Activated CD8-positive, alpha-beta T cell treated with anti-CD3 and anti-CD28 coated beads for 36 hours (primary cell): ENCODE measurements at regions of chr3 and their contacts with region 1.

Region 1: DNA sequence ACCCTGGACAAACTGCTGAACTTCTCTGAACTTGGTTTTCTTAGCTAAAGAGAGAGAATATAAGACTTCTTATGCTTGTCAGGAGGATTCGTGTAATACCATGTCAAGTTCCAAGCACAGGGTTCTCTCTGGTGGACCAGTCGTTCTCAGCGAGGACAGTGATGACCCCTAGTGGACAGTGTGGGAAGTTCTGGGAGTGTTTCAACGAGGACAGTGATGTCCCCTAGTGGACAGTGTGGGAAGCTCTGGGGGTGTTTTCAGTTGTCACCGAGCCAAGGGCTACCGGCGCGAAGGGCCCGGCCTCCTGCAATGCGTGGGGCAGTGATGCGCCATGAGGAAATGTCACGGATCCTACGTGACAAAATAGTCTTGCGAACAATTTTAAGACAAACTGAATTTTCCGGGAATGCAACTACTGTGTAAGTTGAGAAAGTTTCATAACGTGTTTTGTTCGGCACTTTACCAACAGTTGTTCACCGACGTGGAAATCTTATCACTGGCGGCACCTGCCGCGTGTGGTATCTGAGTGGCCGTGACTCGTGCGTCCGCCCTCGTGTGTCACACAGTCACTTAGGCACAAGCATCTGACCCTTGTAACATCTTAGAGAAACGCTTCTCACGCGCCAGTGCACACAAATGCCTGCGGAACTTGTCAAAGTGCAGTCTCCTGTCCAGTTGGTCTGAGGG is 39.3 kb upstream of the MUC4 start:
- DNase-seq: peak; percentile 96
- ATAC-seq: peak; percentile 100
- H3K4me3 Mint-ChIP-seq: peak overlapping the region; percentile 24
- H3K27ac Mint-ChIP-seq: no peak overlapping the region
- H3K4me1 Mint-ChIP-seq: peaks cover 7% of the 10 kb centered on the region
- H3K27me3 Mint-ChIP-seq: peaks cover 9% of the 10 kb centered on the region
- CTCF ChIP-seq: peak; percentile 100

Region 2: DNA sequence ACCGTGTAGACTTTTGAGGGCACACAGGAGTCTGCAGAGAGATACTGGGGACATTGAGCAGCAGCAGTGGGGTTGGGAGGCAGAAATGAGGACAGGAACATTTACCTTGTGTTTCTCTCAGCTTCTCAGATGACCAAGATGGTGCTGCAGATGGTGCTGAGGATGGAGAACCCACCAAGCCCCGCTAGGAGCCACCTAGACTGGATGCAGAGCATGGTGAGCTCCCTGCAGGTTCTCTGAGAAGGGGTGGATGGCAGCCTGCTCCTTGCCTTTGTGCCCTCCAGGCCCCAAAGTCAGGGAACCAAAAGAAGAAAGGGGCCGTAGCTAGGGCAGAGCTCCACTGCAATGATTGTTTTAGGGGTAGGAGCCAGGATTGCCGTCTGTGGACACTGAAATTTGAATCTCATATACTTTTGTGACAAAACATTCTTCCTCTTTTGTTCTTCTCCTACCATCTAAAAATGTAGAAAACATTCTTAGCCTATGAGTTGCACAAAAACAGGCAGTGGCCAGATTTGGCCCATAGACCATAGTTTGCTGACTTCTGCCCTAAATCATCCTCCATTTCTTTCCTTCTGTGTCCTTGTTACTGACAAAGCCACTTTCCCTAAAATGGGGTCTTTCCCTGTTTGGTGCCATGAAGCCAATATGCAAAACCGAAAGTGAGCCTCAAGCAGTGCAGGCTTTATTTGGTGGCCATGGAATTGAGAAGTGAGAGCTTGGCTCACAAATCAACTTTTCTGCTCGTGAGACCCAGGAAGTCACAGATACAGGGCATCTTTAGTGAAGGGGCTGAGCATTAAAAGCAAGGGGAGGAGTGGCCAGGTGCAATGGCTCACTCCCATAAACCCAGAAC is 142.1 kb before region 1 on chr3:
- CTCF ChIA-PET with region 1: interaction called, 13 read pairs
- POLR2A ChIA-PET with region 1: no interaction called
- intact Hi-C with region 1: no loop called
- DNase-seq: no peak
- ATAC-seq: no peak
- H3K4me3 Mint-ChIP-seq: no peak overlapping the region
- H3K27ac Mint-ChIP-seq: no peak overlapping the region
- H3K4me1 Mint-ChIP-seq: no peaks in the 10 kb centered on the region
- H3K27me3 Mint-ChIP-seq: no peaks in the 10 kb centered on the region
- CTCF ChIP-seq: no peak

Region 3: DNA sequence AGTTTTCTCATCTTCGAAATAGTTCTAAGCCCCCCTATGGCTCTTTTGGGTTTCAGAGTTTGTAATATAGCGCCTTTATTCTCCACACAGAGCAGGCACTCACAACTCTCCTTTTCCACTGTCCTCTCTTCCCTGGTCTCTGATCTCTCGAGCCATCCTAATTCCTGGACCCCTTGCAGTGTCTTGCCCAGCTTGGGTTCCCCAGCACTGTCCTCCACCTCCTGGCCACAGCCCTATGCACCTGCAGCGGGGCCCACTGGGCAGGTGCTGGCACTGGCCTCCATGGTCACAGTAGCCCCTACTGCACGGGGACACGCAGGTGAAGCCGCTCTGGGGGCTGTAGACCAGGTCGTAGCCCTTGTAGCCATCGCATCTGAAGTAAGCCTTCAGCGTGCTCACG is 102.3 kb before region 1 on chr3:
- CTCF ChIA-PET with region 1: interaction called, 11 read pairs
- POLR2A ChIA-PET with region 1: no interaction called
- intact Hi-C with region 1: no loop called
- DNase-seq: no peak
- ATAC-seq: no peak
- H3K4me3 Mint-ChIP-seq: no peak overlapping the region
- H3K27ac Mint-ChIP-seq: no peak overlapping the region
- H3K4me1 Mint-ChIP-seq: peaks cover 11% of the 10 kb centered on the region
- H3K27me3 Mint-ChIP-seq: no peaks in the 10 kb centered on the region
- CTCF ChIP-seq: no peak

Region 4: GRCh38 chr3:195811756-195812155 is 39.2 kb before region 1 on chr3 and contains the start of gene MUC4:
- CTCF ChIA-PET with region 1: interaction called, 10 read pairs
- POLR2A ChIA-PET with region 1: no interaction called
- intact Hi-C with region 1: no loop called
- DNase-seq: no peak
- ATAC-seq: no peak
- H3K4me3 Mint-ChIP-seq: no peak within 1 kb of the TSS
- H3K27ac Mint-ChIP-seq: peak within 1 kb of the TSS; percentile 7
- H3K4me1 Mint-ChIP-seq: no peaks in the 10 kb centered on the region
- H3K27me3 Mint-ChIP-seq: peaks cover 2% of the 10 kb centered on the region
- CTCF ChIP-seq: no peak
- total RNA-seq, gene MUC4: 0.20 to 0.31 TPM

Region 5: GRCh38 chr3:195863121-195864006 is 12.4 kb after region 1 on chr3:
- CTCF ChIA-PET with region 1: interaction called, 18 read pairs
- POLR2A ChIA-PET with region 1: interaction called, 6 read pairs
- intact Hi-C with region 1: no loop called
- DNase-seq: peak; percentile 85
- ATAC-seq: peak; percentile 87
- H3K4me3 Mint-ChIP-seq: no peak overlapping the region
- H3K27ac Mint-ChIP-seq: no peak overlapping the region
- H3K4me1 Mint-ChIP-seq: peaks cover 12% of the 10 kb centered on the region
- H3K27me3 Mint-ChIP-seq: no peaks in the 10 kb centered on the region
- CTCF ChIP-seq: peak; percentile 89

Region 6: GRCh38 chr3:195909644-195910508 is 58.9 kb after region 1 on chr3:
- CTCF ChIA-PET with region 1: interaction called, 155 read pairs
- POLR2A ChIA-PET with region 1: interaction called, 4 read pairs
- intact Hi-C with region 1: no loop called
- DNase-seq: peak; percentile 88
- ATAC-seq: peak; percentile 72
- H3K4me3 Mint-ChIP-seq: peak overlapping the region; percentile 69
- H3K27ac Mint-ChIP-seq: peak overlapping the region; percentile 75
- H3K4me1 Mint-ChIP-seq: peaks cover 45% of the 10 kb centered on the region
- H3K27me3 Mint-ChIP-seq: no peaks in the 10 kb centered on the region
- CTCF ChIP-seq: no peak

Region 7: DNA sequence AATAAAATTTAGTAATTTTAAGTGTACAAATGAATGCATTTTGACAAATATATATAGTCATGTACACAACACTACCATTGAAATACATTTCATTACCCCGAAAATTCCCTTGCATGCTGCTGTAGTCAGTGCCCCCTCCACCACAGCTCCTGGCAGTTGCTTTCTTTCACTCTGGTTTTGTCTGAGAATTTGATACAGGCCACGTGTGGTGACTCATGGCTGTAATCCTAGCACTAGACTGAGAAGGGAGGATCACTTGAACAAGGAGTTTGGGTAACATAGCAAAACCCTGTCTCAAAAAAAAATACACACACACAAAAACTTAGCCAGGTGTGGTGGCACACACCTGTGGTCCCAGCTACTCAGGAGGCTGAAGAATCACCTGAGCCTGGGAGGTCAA is 165.5 kb after region 1 on chr3:
- CTCF ChIA-PET with region 1: no interaction called
- POLR2A ChIA-PET with region 1: no interaction called
- intact Hi-C with region 1: no loop called
- DNase-seq: peak; percentile 25
- ATAC-seq: peak; percentile 51
- H3K4me3 Mint-ChIP-seq: no peak overlapping the region
- H3K27ac Mint-ChIP-seq: no peak overlapping the region
- H3K4me1 Mint-ChIP-seq: no peaks in the 10 kb centered on the region
- H3K27me3 Mint-ChIP-seq: peaks cover 3% of the 10 kb centered on the region
- CTCF ChIP-seq: no peak